T-cell (primary cell): ENCODE measurements at regions of chr15 and their contacts with region 1.

Region 1: DNA sequence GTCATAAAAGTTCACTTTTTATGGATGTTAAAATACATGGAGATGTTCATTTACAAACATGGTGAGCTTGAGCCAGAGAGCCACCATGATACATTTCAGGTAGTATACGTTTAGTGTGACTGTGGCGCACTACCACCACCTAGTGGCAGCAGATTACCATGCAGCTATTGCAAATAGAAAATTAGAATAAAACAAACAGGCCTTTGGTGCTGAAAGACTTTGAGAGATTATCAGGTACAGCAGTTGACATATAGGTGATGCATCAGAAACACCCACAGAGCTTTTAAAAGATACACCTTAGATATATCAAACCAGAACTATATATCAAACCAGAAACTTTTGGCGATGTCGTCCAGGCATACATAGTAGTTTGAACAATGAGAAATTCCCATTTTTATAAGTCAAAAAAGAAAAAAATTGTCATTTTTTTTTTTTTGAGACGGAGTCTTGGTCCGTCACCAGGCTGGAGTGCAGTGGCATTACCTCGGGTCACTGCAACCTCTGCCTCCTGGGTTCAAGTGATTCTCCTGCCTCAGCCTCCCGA is 42.0 kb upstream of the ICE2 start:
- DNase-seq: peak; percentile 55 to 90 (median 77)
- ATAC-seq: peak; percentile 75 to 80 (median 80)
- H3K4me3 ChIP-seq: no peak overlapping the region
- H3K4me3 Mint-ChIP-seq: no peak overlapping the region
- H3K27ac ChIP-seq: peak overlapping the region; percentile 52
- H3K27ac Mint-ChIP-seq: peak overlapping the region; percentile 66 to 86
- H3K4me1 ChIP-seq: peaks cover 4 to 10% of the 10 kb centered on the region in 2 experiments
- H3K4me1 Mint-ChIP-seq: peaks cover 52 to 73% (median 67%) of the 10 kb centered on the region in 3 donors
- H3K27me3 ChIP-seq: no peaks in the 10 kb centered on the region
- H3K27me3 Mint-ChIP-seq: no peaks in the 10 kb centered on the region

Region 2: GRCh38 chr15:60507596-60508424 is 13.1 kb before region 1 on chr15:
- CTCF ChIA-PET with region 1: interaction called, 6 to 48 read pairs
- POLR2A ChIA-PET with region 1: interaction called in 1 of 2 experiments, 8 read pairs
- DNase-seq: peak in 31 of 35 experiments; percentile 8 to 88 (median 41)
- ATAC-seq: peak; percentile 74 to 82 (median 76)
- H3K4me3 ChIP-seq: no peak overlapping the region
- H3K4me3 Mint-ChIP-seq: peak overlapping the region in 1 of 3 donors; percentile 37
- H3K27ac ChIP-seq: peak overlapping the region; percentile 53
- H3K27ac Mint-ChIP-seq: peak overlapping the region; percentile 78 to 84
- H3K4me1 ChIP-seq: peaks cover 0 to 20% of the 10 kb centered on the region in 2 experiments
- H3K4me1 Mint-ChIP-seq: peaks cover 53 to 59% (median 59%) of the 10 kb centered on the region in 3 donors
- H3K27me3 ChIP-seq: no peaks in the 10 kb centered on the region
- H3K27me3 Mint-ChIP-seq: no peaks in the 10 kb centered on the region

Region 3: GRCh38 chr15:60541481-60542299 is 20.8 kb after region 1 on chr15:
- CTCF ChIA-PET with region 1: interaction called, 5 to 8 read pairs
- POLR2A ChIA-PET with region 1: interaction called in 1 of 2 experiments, 18 read pairs
- DNase-seq: peak in 1 of 35 experiments; percentile 38
- ATAC-seq: peak in 1 of 4 experiments; percentile 3
- H3K4me3 ChIP-seq: no peak overlapping the region
- H3K4me3 Mint-ChIP-seq: peak overlapping the region; percentile 6 to 62 (median 26)
- H3K27ac ChIP-seq: peak overlapping the region; percentile 73
- H3K27ac Mint-ChIP-seq: peak overlapping the region; percentile 85 to 86
- H3K4me1 ChIP-seq: peaks cover 34 to 69% of the 10 kb centered on the region in 2 experiments
- H3K4me1 Mint-ChIP-seq: peaks cover 95 to 99% (median 98%) of the 10 kb centered on the region in 3 donors
- H3K27me3 ChIP-seq: no peaks in the 10 kb centered on the region
- H3K27me3 Mint-ChIP-seq: no peaks in the 10 kb centered on the region

Region 4: DNA sequence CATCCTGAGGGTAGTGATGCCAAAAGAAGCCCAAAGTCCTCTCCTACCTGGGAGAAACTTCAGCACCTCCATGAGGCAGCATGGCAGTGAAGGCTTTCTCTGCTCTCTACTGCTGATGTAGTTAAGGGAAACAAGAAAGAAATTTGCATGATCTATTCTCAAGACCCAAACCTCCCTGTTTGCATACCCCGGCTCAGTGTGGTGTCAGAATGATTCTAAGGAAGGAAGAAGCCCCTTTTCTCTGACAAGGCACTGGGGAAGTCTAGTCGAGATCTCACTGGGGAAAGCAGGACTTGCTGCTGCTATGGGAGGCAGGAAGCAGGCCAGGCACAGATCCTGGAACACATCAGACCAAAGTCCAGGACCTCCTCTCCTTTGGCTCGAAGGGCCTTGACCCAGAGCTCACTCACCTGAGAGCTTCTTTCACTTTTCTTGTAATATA is 47.4 kb after region 1 on chr15:
- CTCF ChIA-PET with region 1: interaction called, 4 to 12 read pairs
- POLR2A ChIA-PET with region 1: interaction called in 1 of 2 experiments, 10 read pairs
- DNase-seq: no peak
- ATAC-seq: no peak
- H3K4me3 ChIP-seq: no peak overlapping the region
- H3K4me3 Mint-ChIP-seq: peak overlapping the region; percentile 56 to 74 (median 66)
- H3K27ac ChIP-seq: peak overlapping the region; percentile 80
- H3K27ac Mint-ChIP-seq: peak overlapping the region; percentile 92 to 93
- H3K4me1 ChIP-seq: peaks cover 57 to 70% of the 10 kb centered on the region in 2 experiments
- H3K4me1 Mint-ChIP-seq: peaks cover 95 to 97% (median 97%) of the 10 kb centered on the region in 3 donors
- H3K27me3 ChIP-seq: no peaks in the 10 kb centered on the region
- H3K27me3 Mint-ChIP-seq: no peaks in the 10 kb centered on the region

Region 5: GRCh38 chr15:60916679-60917460 is 396.0 kb after region 1 on chr15:
- CTCF ChIA-PET with region 1: interaction called in 1 of 2 experiments, 17 read pairs
- POLR2A ChIA-PET with region 1: no interaction called
- DNase-seq: peak; percentile 73 to 95 (median 87)
- ATAC-seq: peak; percentile 94 to 99 (median 98)
- H3K4me3 ChIP-seq: no peak overlapping the region
- H3K4me3 Mint-ChIP-seq: no peak overlapping the region
- H3K27ac ChIP-seq: peak overlapping the region; percentile 48
- H3K27ac Mint-ChIP-seq: peak overlapping the region; percentile 65 to 69
- H3K4me1 ChIP-seq: peaks cover 3 to 8% of the 10 kb centered on the region in 2 experiments
- H3K4me1 Mint-ChIP-seq: peaks cover 6 to 15% (median 9%) of the 10 kb centered on the region in 3 donors
- H3K27me3 ChIP-seq: peaks cover 0 to 3% of the 10 kb centered on the region in 2 experiments
- H3K27me3 Mint-ChIP-seq: peaks cover 0 to 1% of the 10 kb centered on the region in 2 donors